Activated naive CD4-positive, alpha-beta T cell treated with anti-CD3 and anti-CD28 coated beads for 36 hours (primary cell): ENCODE measurements at regions of chr3 and their contacts with region 1.

Region 1: DNA sequence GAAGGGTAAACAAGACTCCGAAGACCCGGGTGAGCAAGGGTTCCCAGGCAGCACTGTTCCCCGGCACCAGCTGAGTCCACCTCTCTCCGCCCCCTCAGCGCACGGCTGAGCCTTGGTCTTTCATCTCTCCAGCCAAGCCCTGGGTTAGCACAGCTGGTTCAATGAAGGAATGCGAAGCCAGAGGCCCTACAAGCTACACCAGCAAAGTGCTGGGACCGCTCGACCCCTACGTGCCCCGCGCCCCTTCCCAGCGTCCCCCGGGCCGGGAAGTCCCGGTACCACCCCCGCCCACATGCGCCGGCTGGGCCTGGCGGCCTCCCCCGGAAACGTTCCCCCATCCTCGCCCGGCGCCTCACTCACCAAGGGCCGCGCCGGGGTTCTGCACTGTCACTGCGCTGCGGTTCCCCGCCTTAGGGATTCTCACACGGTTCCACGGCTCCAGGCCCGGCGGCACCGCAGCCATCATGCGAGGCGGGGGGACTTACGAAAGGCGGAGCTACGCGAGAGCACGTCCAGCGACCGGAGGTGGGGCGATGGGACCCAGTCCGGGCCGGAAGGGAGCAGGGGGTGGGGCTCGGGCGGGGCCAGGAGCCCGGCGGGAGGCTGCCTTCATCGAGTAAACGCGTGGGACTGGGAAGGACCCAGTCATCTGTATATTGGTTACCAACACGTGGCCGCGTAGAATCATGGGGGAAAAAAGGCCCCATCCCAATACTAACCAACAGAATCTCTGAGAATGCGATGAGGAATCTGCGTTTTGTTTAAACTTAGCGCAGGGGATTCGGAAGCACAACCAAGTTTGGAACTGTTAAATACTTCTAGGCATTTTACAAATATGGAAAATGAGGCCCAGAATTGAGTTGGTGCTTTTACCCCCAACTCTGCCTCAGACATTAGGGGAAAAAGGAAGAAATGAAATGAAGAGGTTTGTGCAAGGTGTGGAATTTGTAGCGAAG is 28.7 kb downstream of the GTPBP8 start:
- DNase-seq: peak; percentile 94
- H3K4me3 Mint-ChIP-seq: peak overlapping the region; percentile 94
- H3K27ac Mint-ChIP-seq: peak overlapping the region; percentile 99
- H3K4me1 Mint-ChIP-seq: peaks cover 64% of the 10 kb centered on the region
- H3K27me3 Mint-ChIP-seq: no peaks in the 10 kb centered on the region

Region 2: DNA sequence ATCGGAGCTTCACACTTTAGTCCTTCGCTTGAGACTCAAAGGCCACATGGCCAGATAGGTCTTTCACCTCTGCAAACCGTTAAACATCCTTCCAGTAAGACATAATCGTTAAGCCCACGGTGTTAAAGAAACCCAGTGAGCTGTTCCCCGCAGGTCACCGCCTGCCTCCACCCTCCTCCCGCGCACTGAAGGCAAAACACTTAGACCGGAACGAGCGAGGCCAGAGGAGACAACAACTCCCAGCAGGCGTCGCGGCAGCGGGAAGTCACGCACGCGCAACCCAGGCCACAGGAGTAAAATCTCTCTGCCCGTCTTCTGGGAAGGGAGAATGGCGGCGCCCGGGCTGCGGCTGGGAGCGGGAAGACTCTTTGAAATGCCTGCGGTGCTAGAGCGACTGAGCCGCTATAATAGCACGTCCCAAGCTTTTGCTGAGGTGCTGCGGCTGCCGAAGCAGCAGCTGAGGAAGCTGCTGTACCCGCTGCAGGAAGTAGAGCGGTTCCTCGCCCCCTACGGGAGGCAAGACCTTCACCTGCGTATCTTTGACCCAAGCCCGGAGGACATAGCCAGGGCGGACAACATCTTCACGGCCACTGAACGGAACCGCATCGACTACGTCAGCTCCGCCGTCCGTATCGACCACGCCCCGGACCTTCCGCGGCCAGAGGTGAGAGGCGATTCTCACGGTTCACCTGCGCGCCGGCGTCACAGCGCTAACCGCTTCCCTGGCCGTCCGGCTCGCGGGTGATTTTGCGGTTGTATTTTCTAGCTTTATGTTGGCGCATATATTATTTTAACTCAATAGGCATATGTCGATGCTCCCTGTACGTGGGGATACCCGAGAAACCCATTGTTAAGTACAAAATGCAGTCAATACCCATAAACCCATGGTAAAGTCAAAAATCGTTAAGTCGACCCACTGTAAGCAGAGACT is 28.5 kb before region 1 on chr3 and contains the start of gene GTPBP8:
- CTCF ChIA-PET with region 1: interaction called, 7 read pairs
- intact Hi-C with region 1: loop called (anchors 1 kb)
- DNase-seq: peak; percentile 94
- H3K4me3 Mint-ChIP-seq: peak within 1 kb of the TSS; percentile 94
- H3K27ac Mint-ChIP-seq: peak within 1 kb of the TSS; percentile 96
- H3K4me1 Mint-ChIP-seq: peaks cover 68% of the 10 kb centered on the region
- H3K27me3 Mint-ChIP-seq: no peaks in the 10 kb centered on the region
- total RNA-seq, gene GTPBP8: 62.8 to 68.9 TPM

Region 3: DNA sequence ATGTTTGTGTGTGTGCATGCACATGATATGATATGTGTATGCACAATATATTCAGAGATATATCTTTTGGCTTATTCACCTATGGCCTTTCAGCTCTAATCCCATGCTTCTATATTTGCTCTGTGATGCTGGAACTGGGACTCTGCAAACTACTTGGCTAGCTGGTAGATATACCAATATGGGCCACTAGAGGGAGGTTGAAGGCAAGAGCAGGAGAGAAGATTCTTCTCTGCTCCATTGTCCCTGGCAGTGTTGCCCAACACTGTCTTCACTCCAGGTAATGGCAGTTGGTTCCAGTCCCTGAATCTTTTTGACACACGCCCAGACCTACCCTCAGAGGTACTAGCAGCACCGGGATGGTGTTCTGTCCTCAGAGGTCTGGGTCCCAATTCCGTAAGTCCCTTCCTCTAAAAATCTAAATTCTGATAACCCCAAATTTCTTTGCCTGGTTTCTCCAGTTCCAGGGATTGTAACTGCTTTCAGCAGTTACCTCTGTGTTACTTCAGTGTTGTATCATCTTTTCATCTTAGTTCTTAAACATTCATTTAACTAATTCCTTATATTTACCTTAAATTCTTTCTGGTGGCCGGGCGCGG is 16.0 kb after region 1 on chr3:
- CTCF ChIA-PET with region 1: interaction called, 11 read pairs
- intact Hi-C with region 1: no loop called
- DNase-seq: peak; percentile 48
- H3K4me3 Mint-ChIP-seq: no peak overlapping the region
- H3K27ac Mint-ChIP-seq: no peak overlapping the region
- H3K4me1 Mint-ChIP-seq: no peaks in the 10 kb centered on the region
- H3K27me3 Mint-ChIP-seq: no peaks in the 10 kb centered on the region

Region 4: DNA sequence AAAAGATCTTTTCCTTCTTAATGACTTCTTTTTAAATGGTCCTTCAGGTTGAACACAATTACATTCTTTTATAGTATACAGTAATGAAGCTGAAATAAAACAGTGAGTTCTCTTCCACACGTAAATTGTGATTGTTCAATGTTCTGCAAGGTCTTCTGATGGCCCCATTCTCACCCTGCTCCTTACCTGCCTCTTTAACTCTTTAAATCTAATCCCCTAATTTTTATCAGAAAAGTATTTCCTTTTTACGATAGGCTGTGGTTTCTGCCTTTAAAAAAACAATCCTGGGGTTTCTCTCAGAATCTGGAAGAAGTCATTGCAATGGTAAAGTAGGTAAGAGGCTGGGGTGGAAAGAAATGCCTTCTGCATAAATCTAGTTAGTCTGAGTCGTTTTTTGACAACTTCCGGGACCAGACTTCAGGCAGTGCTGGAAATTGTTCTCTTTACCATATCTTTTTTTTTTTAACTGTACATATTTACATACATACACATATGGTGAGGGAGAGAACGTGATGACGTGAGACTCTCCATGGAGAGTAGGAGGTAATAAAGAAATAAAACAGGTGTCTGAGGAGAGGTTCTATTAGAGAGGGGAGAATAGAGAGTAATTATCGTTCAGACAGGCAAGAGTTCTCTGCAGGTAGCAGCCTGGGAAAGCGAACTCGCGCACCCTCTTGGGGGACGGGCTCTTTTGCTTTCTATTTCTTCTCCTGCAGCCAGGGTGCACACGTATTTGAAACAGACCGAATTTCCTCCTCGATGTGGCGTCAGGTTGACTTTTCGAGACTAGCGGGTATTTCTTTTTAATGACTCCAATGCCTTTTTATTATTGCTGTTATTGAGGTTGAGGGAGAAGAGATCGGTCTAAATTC is 512.6 kb after region 1 on chr3 and contains the start of gene SIDT1:
- CTCF ChIA-PET with region 1: no interaction called
- intact Hi-C with region 1: loop called (anchors 5 kb)
- DNase-seq: peak; percentile 82
- H3K4me3 Mint-ChIP-seq: peak within 1 kb of the TSS; percentile 97
- H3K27ac Mint-ChIP-seq: peak within 1 kb of the TSS; percentile 96
- H3K4me1 Mint-ChIP-seq: peaks cover 46% of the 10 kb centered on the region
- H3K27me3 Mint-ChIP-seq: no peaks in the 10 kb centered on the region
- total RNA-seq, gene SIDT1: 14.6 to 14.9 TPM